ENCODE measurements at regions of chr1 and their contacts with region 1.

Region 1: GRCh38 chr1:29412591-29412990 is 176.3 kb downstream of the PTPRU start:
- DNase-seq: no peak
- ATAC-seq: no peak
- H3K4me3 ChIP-seq: no peak overlapping the region
- H3K27ac ChIP-seq: no peak overlapping the region
- H3K4me1 ChIP-seq: no peaks in the 10 kb centered on the region
- H3K27me3 ChIP-seq: no peaks in the 10 kb centered on the region
- CTCF ChIP-seq: no peak

Region 2: DNA sequence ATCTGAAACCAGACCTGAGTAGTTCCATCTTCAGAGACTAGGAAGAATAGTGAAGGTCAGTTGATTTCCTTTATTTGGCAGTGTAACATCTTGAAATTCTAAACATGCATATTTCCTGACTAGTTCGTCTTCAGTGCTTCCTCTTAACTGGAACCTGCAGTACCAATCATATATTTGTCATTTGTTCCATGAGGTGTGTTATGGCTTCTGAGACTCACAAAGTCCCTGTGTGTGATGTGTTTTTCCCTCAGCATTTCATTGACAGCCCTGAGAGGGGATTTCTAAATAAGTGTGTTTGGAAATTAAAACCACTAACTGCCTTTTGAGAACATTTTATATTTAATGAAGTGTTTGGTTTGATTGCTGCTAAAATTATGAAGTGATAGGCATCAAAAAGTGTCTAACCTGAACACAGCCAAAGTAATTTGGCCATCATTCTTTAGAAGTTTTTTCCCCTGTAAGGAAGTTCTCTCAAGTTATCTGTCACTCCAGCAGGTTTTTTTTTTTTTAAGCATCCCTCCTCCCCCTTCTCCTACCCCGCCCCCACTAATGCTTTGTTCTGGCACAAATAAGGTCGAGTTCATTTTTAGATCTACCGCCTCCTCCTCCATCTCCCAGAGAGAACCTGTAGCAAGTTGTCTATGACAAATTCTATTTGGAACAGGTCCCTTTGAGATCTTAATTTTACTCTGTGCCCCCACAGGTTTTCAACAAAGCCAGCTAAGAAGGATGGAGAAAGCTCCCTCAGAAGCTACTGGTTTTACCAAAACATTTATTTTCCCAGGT is 350.2 kb before region 1 on chr1:
- CTCF ChIA-PET with region 1: no interaction called
- POLR2A ChIA-PET with region 1: no interaction called
- in situ Hi-C with region 1: no loop called
- intact Hi-C with region 1: no loop called
- DNase-seq: no peak
- ATAC-seq: no peak
- H3K4me3 ChIP-seq: no peak overlapping the region
- H3K27ac ChIP-seq: no peak overlapping the region
- H3K4me1 ChIP-seq: no peaks in the 10 kb centered on the region
- H3K27me3 ChIP-seq: no peaks in the 10 kb centered on the region
- CTCF ChIP-seq: no peak

Region 3: GRCh38 chr1:29368936-29369932 is 43.4 kb before region 1 on chr1:
- CTCF ChIA-PET with region 1: no interaction called
- POLR2A ChIA-PET with region 1: no interaction called
- in situ Hi-C with region 1: no loop called
- intact Hi-C with region 1: no loop called
- DNase-seq: no peak
- ATAC-seq: peak; percentile 53; the same call in 1 of the 2 replicates
- H3K4me3 ChIP-seq: no peak overlapping the region
- H3K27ac ChIP-seq: no peak overlapping the region
- H3K4me1 ChIP-seq: no peaks in the 10 kb centered on the region
- H3K27me3 ChIP-seq: peaks cover 30% of the 10 kb centered on the region
- CTCF ChIP-seq: no peak

Region 4: DNA sequence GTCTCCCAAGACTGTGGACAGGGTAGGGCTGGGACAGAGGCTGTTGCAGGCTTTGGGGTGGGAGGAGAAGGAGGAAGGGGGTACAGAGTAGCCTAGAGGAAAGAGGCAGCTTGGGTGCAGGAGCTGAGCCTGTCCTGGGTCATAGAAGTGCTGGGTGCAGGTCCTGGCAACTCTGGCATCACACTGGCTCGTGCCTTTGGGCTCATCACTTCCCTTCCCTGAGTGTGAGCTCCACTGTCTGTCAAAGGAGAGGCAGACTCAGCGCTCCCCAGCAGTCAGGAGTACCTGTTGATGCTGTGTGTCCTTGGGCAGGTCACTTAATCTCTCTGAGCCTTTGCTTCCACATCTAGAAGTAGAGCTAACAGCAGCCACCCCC is 19.2 kb before region 1 on chr1:
- CTCF ChIA-PET with region 1: interaction called, 13 read pairs
- POLR2A ChIA-PET with region 1: no interaction called
- in situ Hi-C with region 1: no loop called
- intact Hi-C with region 1: no loop called
- DNase-seq: no peak
- ATAC-seq: no peak
- H3K4me3 ChIP-seq: no peak overlapping the region
- H3K27ac ChIP-seq: no peak overlapping the region
- H3K4me1 ChIP-seq: no peaks in the 10 kb centered on the region
- H3K27me3 ChIP-seq: no peaks in the 10 kb centered on the region; the same call in 1 of the 2 replicates
- CTCF ChIP-seq: no peak